Activated naive CD4-positive, alpha-beta T cell treated with anti-CD3 and anti-CD28 coated beads, Interleukin-2, amount 10 ng/mL, durations not matched to agents 7 days and 5 days (primary cell): ENCODE measurements at regions of chr10 and their contacts with region 1.

Region 1: GRCh38 chr10:32367793-32368453 is 21.0 kb upstream of the EPC1 start:
- DNase-seq: peak; percentile 82
- H3K4me3 Mint-ChIP-seq: no peak overlapping the region
- H3K27ac Mint-ChIP-seq: no peak overlapping the region
- H3K4me1 Mint-ChIP-seq: peaks cover 44% of the 10 kb centered on the region
- H3K27me3 Mint-ChIP-seq: no peaks in the 10 kb centered on the region

Region 2: GRCh38 chr10:31707093-31708039 is 660.6 kb before region 1 on chr10:
- CTCF ChIA-PET with region 1: no interaction called
- DNase-seq: peak; percentile 51
- H3K4me3 Mint-ChIP-seq: no peak overlapping the region
- H3K27ac Mint-ChIP-seq: peak overlapping the region; percentile 79
- H3K4me1 Mint-ChIP-seq: peaks cover 21% of the 10 kb centered on the region
- H3K27me3 Mint-ChIP-seq: peaks cover 3% of the 10 kb centered on the region

Region 3: GRCh38 chr10:32256613-32257437 is 111.1 kb before region 1 on chr10:
- CTCF ChIA-PET with region 1: interaction called, 23 read pairs
- DNase-seq: peak; percentile 77
- H3K4me3 Mint-ChIP-seq: no peak overlapping the region
- H3K27ac Mint-ChIP-seq: no peak overlapping the region
- H3K4me1 Mint-ChIP-seq: peaks cover 14% of the 10 kb centered on the region
- H3K27me3 Mint-ChIP-seq: peaks cover 3% of the 10 kb centered on the region

Region 4: GRCh38 chr10:32346134-32346550 is 21.8 kb before region 1 on chr10:
- CTCF ChIA-PET with region 1: interaction called, 10 read pairs
- DNase-seq: peak; percentile 97
- H3K4me3 Mint-ChIP-seq: peak overlapping the region; percentile 92
- H3K27ac Mint-ChIP-seq: peak overlapping the region; percentile 99
- H3K4me1 Mint-ChIP-seq: peaks cover 65% of the 10 kb centered on the region
- H3K27me3 Mint-ChIP-seq: peaks cover 6% of the 10 kb centered on the region